GM12878 (cell line): ENCODE measurements at regions of chr1 and their contacts with region 1.

Region 1: GRCh38 chr1:28877132-28877781 is 37.1 kb upstream of the EPB41 start:
- DNase-seq: peak; percentile 28
- ATAC-seq: peak; percentile 84
- H3K4me3 ChIP-seq: no peak overlapping the region
- H3K27ac ChIP-seq: no peak overlapping the region
- H3K4me1 ChIP-seq: no peaks in the 10 kb centered on the region
- H3K27me3 ChIP-seq: no peaks in the 10 kb centered on the region
- CTCF ChIP-seq: peak; percentile 89 to 96 (median 93)
- EP300 ChIP-seq: no peak
- POLR2A ChIP-seq: no peak
- RAD21 ChIP-seq: peak; percentile 97

Region 2: GRCh38 chr1:28518000-28518744 is 359.1 kb before region 1 on chr1:
- CTCF ChIA-PET with region 1: interaction called, 4 read pairs
- POLR2A ChIA-PET with region 1: no interaction called
- RAD21 ChIA-PET with region 1: interaction called, 3 read pairs
- SMC1A ChIA-PET with region 1: no interaction called
- in situ Hi-C with region 1: loop called (anchors 5 kb)
- intact Hi-C with region 1: loop called (anchors 2 kb)
- DNase-seq: no peak
- ATAC-seq: peak; percentile 72
- H3K4me3 ChIP-seq: peak overlapping the region; percentile 80
- H3K27ac ChIP-seq: peak overlapping the region; percentile 84
- H3K4me1 ChIP-seq: peaks cover 18% of the 10 kb centered on the region
- H3K27me3 ChIP-seq: no peaks in the 10 kb centered on the region
- CTCF ChIP-seq: peak; percentile 94 to 99 (median 97); a peak in 5 of 6 replicates
- EP300 ChIP-seq: no peak
- POLR2A ChIP-seq: peak; percentile 89
- RAD21 ChIP-seq: peak; percentile 89

Region 3: GRCh38 chr1:28642847-28643635 is 234.2 kb before region 1 on chr1 and contains the start of gene TAF12:
- CTCF ChIA-PET with region 1: interaction called, 31 read pairs
- POLR2A ChIA-PET with region 1: interaction called, 7 read pairs
- RAD21 ChIA-PET with region 1: interaction called, 11 read pairs
- SMC1A ChIA-PET with region 1: interaction called, 18 read pairs
- in situ Hi-C with region 1: loop called (anchors 5 kb)
- intact Hi-C with region 1: loop called (anchors 2 kb)
- DNase-seq: peak; percentile 93
- ATAC-seq: peak; percentile 90
- H3K4me3 ChIP-seq: peak within 1 kb of the TSS; percentile 92
- H3K27ac ChIP-seq: peak within 1 kb of the TSS; percentile 90
- H3K4me1 ChIP-seq: peaks cover 13% of the 10 kb centered on the region
- H3K27me3 ChIP-seq: no peaks in the 10 kb centered on the region
- CTCF ChIP-seq: peak; percentile 32 to 73 (median 42); a peak in 4 of 6 replicates
- EP300 ChIP-seq: 0 out of 4 replicates have a peak, but pooled peaks of 1 of the 2 experiments have one; percentile 31
- POLR2A ChIP-seq: peak; percentile 99
- RAD21 ChIP-seq: peak; percentile 49
- polyA plus RNA-seq, gene TAF12: 34.3 to 41.9 TPM

Region 4: DNA sequence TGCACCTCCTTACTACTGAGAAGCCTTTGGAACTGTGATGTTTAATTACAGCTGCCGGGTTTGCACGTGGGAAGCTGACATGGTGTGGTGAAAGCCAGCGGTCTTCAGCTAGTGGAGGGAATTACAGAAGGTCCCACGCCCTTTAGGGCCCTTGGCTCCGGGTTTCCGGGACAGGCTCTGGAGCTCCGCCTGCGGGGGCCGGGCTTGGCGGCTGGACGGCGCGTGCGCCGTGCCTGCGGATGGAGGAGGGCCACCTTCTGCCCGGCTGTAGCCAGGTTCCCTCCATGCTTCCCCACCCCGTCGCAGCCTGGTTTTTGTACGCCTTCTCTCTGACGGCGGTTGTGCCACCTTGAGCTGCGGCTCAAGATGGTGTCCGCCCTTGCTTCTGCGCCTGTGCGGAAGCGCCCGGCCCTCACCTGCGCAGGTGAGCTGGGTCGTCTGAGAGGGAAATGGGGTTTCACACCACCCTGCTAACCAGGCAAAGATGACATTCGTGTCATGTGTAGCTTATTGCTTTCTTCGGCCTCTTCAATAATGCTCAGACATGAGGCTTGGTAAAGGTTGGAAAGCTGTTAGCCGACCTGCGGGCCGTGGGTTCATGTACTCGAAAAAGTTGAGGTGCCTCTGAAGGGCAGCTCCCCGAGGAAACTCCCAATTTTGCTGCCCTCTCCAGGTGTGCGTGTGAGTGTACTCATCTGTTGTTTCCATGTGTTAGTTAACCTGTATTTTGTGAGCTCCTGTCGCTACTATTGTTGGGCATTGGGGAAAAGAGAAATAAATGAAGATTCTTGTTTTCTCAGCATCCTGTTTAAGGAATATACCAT is 101.9 kb before region 1 on chr1:
- CTCF ChIA-PET with region 1: interaction called, 36 read pairs
- POLR2A ChIA-PET with region 1: interaction called, 3 read pairs
- RAD21 ChIA-PET with region 1: interaction called, 11 read pairs
- SMC1A ChIA-PET with region 1: interaction called, 14 read pairs
- in situ Hi-C with region 1: no loop called
- intact Hi-C with region 1: no loop called
- DNase-seq: no peak
- ATAC-seq: peak; percentile 98
- H3K4me3 ChIP-seq: peak overlapping the region; percentile 7; the same call in 1 of the 2 replicates
- H3K27ac ChIP-seq: no peak overlapping the region
- H3K4me1 ChIP-seq: no peaks in the 10 kb centered on the region
- H3K27me3 ChIP-seq: no peaks in the 10 kb centered on the region
- CTCF ChIP-seq: no peak
- EP300 ChIP-seq: no peak
- POLR2A ChIP-seq: peak; percentile 67
- RAD21 ChIP-seq: no peak

Region 5: GRCh38 chr1:28860332-28861073 is 16.8 kb before region 1 on chr1:
- CTCF ChIA-PET with region 1: interaction called, 20 read pairs
- POLR2A ChIA-PET with region 1: no interaction called
- RAD21 ChIA-PET with region 1: interaction called, 10 read pairs
- SMC1A ChIA-PET with region 1: no interaction called
- in situ Hi-C with region 1: no loop called
- intact Hi-C with region 1: no loop called
- DNase-seq: no peak
- ATAC-seq: peak; percentile 86
- H3K4me3 ChIP-seq: no peak overlapping the region
- H3K27ac ChIP-seq: no peak overlapping the region
- H3K4me1 ChIP-seq: no peaks in the 10 kb centered on the region
- H3K27me3 ChIP-seq: no peaks in the 10 kb centered on the region; a peak in 1 of 4 replicates
- CTCF ChIP-seq: no peak
- EP300 ChIP-seq: no peak
- POLR2A ChIP-seq: no peak
- RAD21 ChIP-seq: no peak

Region 6: DNA sequence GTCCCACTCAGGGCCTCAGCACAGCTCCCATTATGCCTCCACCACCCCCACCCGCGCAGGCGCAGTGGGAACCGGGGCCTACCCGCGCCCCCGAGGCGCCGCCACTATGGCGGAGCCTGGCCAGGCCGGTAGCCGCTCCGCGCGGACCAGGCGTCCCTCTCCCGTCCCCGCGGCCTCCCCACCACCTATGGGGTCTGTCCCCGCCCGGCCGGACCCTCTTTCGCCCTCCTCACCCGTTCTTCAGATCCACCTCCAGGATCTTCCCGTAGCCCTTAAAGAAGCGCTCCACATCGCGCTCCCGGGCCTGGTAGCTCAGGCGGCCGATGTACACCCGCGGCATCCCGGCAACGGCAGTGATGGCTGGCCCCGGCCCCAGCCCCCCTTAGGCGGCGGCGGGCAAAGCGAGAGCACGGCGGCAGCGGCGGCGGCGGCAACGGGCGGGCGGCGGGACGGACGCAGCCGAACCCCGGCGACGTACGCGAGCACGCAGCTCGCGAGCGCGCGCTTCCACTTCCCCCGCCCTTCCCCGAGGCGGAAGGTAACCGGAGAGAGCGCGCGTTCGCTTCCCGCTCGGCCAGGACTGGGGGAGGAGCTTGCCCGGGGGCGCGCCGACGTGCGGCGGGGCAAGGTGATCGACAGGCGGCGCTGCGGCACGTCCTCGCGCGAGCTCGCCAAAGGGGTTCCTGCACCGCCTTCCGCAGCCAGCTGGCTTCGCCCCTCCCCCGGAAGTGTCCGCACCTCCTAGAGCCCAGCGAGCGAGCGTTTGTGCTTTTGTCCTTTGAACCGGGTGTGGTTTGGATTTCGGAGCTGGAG is 304.4 kb after region 1 on chr1 and contains the start of gene SRSF4:
- CTCF ChIA-PET with region 1: interaction called, 27 read pairs
- POLR2A ChIA-PET with region 1: interaction called, 35 read pairs
- RAD21 ChIA-PET with region 1: interaction called, 16 read pairs
- SMC1A ChIA-PET with region 1: interaction called, 11 read pairs
- in situ Hi-C with region 1: no loop called
- intact Hi-C with region 1: no loop called
- DNase-seq: peak; percentile 94
- ATAC-seq: peak; percentile 93
- H3K4me3 ChIP-seq: peak within 1 kb of the TSS; percentile 97
- H3K27ac ChIP-seq: peak within 1 kb of the TSS; percentile 99
- H3K4me1 ChIP-seq: no peaks in the 10 kb centered on the region; the same call in none of the 2 replicates
- H3K27me3 ChIP-seq: no peaks in the 10 kb centered on the region
- CTCF ChIP-seq: peak; percentile 55 to 95 (median 63); a peak in 4 of 6 replicates
- EP300 ChIP-seq: no peak
- POLR2A ChIP-seq: peak; percentile 85
- RAD21 ChIP-seq: no peak
- polyA plus RNA-seq, gene SRSF4: 17.2 to 26.4 TPM